Sciatic nerve (tissue), 2 donors: ENCODE measurements at regions of chr11 and their contacts with region 1.

Region 1: DNA sequence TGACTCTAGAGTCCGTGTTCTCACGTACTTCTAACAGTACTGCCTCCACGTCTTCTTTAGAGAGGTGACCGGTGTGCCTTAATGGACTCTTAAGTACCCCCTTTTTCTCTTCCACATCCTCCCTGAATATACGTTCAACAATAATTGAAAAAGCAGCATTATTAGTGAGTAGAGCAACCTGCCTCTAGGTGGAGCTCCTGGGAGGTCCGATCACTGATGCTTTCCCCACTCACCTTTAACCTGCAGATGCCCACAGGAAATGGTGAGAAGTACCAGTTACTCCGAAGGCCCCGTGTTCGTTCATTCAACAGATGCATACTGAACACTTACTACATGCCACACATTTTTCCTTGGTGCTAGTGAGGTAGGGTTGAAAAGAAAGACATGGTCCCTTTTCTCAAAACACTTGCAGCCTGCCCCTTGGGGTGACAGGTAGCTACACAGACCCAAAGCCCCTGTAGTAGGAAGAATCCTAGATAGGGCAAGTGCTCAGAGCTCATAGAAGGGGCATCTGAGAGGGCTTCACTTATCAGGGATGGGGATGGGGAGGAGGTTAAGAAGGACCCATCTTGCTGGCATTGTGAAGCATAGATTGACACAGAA is 72.7 kb downstream of the FEZ1 start:
- DNase-seq: no peak
- ATAC-seq: no peak

Region 2: DNA sequence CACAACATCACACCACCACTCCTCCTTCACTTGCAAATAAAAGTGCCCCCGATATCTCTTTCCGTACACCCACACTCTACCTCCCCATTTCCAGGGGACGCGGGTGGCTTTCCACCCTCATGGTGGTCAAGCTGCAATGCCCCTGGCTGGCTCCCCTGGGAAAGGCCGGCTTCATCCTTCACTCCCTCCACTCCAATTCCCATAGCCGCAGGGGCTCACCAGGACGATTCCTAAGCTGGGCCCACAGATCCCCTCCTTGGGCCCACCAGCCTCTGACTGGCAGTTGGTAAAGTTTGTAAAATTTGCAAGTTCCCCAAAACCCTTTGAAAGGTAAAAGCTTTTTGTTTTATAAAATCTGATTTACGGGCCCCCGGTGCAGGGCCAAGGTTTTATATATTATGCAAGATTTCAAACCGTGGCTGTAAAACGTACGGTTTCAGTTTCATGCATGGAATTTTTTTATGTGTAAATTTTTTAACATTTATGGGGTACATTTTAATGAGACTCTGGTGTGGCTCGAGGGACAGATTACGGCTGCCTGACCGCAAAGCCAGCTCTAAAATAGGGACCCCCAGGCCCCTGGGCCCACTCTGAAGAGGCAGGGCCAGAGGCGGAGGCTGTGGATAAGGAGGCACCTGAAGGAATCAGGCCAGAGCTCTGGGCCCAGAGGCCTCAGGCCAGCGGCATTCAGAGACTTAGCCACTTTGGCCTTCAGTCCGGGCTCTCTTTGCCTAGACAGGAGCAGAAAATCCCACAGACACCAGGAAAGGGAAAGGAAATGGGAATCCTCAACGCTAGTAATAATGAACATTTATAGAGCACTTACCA is 33.8 kb before region 1 on chr11:
- intact Hi-C with region 1: loop called (anchors 2 kb)
- DNase-seq: no peak
- ATAC-seq: no peak

Region 3: GRCh38 chr11:126345759-126346585 is 922.6 kb after region 1 on chr11:
- intact Hi-C with region 1: no loop called
- DNase-seq: no peak
- ATAC-seq: peak; percentile 69